MCF 10A (cell line): ENCODE measurements at regions of chr17 and their contacts with region 1.

Region 1: DNA sequence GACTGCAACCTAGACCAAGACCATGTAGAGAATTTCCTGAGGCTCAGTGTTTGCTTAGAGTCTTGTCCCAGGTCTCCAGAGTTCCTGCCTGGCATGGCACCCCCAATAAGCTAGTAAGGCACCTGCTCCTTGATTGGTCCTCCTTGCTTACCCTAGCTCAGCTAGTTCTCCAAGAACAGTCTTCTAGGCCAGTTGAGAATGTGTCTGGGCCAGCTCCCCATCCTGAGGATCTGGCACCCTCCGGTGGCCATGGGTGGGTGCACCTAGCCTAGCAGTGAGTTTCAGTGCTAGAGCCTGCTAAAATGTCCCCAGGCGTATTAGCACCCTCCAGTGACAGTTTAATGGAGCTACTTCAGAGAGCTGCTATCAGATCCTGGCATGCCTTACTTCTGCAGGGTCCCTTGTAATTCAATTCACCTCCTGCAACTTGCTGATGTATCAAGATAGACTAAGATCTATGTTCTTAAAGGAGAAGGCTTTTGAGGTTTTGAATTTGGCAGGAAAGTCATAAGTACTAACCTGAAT is 44.4 kb upstream of the MED13 start:
- DNase-seq: peak; percentile 85
- H3K4me3 Mint-ChIP-seq: no peak overlapping the region
- H3K27ac Mint-ChIP-seq: no peak overlapping the region
- H3K4me1 Mint-ChIP-seq: no peaks in the 10 kb centered on the region
- H3K27me3 Mint-ChIP-seq: no peaks in the 10 kb centered on the region
- CTCF ChIP-seq: peak; percentile 69

Region 2: DNA sequence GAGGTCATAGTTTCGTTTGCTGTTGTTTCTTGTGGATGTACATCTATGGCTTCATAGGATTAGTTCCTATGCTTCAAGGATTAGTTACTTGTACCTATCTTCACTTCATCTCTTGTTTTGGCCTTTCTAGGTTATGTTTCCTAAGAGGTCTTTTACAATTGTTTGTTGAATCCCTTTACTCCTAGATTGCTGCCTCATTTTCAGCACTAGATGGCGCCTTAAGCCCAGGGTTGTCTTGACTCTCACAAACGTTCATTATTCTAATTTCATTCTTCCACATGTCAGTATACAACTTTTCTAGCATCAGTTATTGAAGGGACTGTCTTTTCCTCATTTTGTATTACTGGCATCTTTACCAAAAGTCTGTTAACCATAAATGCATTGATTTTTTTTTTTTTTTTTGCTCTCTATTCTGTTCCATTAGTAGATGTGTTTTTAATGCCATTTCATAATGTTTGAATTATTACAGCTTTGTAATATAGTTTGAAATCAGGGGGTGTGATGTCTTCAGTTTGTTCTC is 473.5 kb before region 1 on chr17:
- CTCF ChIA-PET with region 1: no interaction called
- POLR2A ChIA-PET with region 1: no interaction called
- intact Hi-C with region 1: loop called (anchors 2 kb)
- DNase-seq: peak; percentile 75
- H3K4me3 Mint-ChIP-seq: no peak overlapping the region
- H3K27ac Mint-ChIP-seq: no peak overlapping the region
- H3K4me1 Mint-ChIP-seq: no peaks in the 10 kb centered on the region
- H3K27me3 Mint-ChIP-seq: no peaks in the 10 kb centered on the region
- CTCF ChIP-seq: peak; percentile 80

Region 3: GRCh38 chr17:61837175-61838051 is 272.0 kb before region 1 on chr17:
- CTCF ChIA-PET with region 1: no interaction called
- POLR2A ChIA-PET with region 1: no interaction called
- intact Hi-C with region 1: loop called (anchors 1 kb)
- DNase-seq: peak; percentile 82
- H3K4me3 Mint-ChIP-seq: no peak overlapping the region
- H3K27ac Mint-ChIP-seq: no peak overlapping the region
- H3K4me1 Mint-ChIP-seq: no peaks in the 10 kb centered on the region
- H3K27me3 Mint-ChIP-seq: no peaks in the 10 kb centered on the region
- CTCF ChIP-seq: peak; percentile 75

Region 4: GRCh38 chr17:61927200-61928165 is 182.0 kb before region 1 on chr17 and contains the start of gene INTS2:
- CTCF ChIA-PET with region 1: no interaction called
- POLR2A ChIA-PET with region 1: no interaction called
- intact Hi-C with region 1: loop called (anchors 1 kb)
- DNase-seq: peak; percentile 96
- H3K4me3 Mint-ChIP-seq: peak within 1 kb of the TSS; percentile 92
- H3K27ac Mint-ChIP-seq: peak within 1 kb of the TSS; percentile 95
- H3K4me1 Mint-ChIP-seq: peaks cover 12% of the 10 kb centered on the region
- H3K27me3 Mint-ChIP-seq: no peaks in the 10 kb centered on the region
- CTCF ChIP-seq: no peak
- total RNA-seq, gene INTS2: 11.8 and 19.2 TPM in 2 replicates

Region 5: DNA sequence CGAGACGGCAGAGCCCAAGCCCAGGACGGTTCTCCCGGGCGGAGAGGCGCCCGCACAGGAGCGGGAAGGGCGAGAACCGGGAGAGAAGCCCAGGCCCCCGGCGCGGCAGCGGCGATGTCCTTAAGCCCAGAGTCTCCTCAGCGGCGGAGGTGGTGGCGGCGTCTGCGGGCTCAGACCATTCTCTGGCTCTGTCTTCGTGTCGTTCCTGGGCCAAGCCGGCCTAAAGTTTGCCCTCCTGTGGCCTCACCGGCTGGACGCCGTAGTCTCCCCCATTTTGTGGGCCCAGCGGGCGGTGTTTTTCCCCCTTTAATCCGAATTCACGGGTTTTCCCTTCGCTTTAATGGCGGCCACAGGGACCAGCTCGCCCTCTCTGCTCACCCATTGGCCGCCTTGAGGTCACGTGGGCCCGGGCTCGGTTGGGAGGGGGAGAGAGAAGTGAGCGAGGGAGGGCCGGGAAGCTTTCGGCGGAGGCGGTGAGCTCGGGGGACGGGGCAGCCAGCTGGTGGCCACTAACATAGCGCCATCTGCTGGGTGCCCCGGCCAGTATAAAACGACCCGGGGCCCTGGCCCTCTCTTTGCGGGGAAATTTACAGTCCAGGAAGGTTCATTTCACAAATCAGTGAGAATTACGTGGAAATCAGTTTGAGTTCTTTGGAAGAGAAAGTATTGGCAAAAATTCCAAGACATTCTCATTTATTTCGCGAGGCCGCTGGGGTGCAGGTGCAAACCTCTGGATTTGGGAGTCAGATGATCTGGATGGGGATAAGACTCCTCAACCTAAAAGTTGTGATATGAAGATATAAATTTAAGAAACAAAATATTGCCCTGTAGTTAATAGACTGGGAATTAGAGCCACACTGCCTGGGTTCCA is 43.6 kb before region 1 on chr17:
- CTCF ChIA-PET with region 1: no interaction called
- POLR2A ChIA-PET with region 1: interaction called, 5 read pairs
- intact Hi-C with region 1: loop called (anchors 2 kb)
- DNase-seq: peak; percentile 98
- H3K4me3 Mint-ChIP-seq: peak overlapping the region; percentile 90
- H3K27ac Mint-ChIP-seq: peak overlapping the region; percentile 95
- H3K4me1 Mint-ChIP-seq: peaks cover 24% of the 10 kb centered on the region
- H3K27me3 Mint-ChIP-seq: no peaks in the 10 kb centered on the region
- CTCF ChIP-seq: peak; percentile 77

Region 6: GRCh38 chr17:62164763-62165753 is 55.6 kb after region 1 on chr17:
- CTCF ChIA-PET with region 1: interaction called, 10 read pairs
- POLR2A ChIA-PET with region 1: no interaction called
- intact Hi-C with region 1: no loop called
- DNase-seq: no peak
- H3K4me3 Mint-ChIP-seq: no peak overlapping the region
- H3K27ac Mint-ChIP-seq: no peak overlapping the region
- H3K4me1 Mint-ChIP-seq: peaks cover 6% of the 10 kb centered on the region
- H3K27me3 Mint-ChIP-seq: no peaks in the 10 kb centered on the region
- CTCF ChIP-seq: no peak